ENCODE measurements at regions of chr10 and their contacts with region 1.

Region 1: DNA sequence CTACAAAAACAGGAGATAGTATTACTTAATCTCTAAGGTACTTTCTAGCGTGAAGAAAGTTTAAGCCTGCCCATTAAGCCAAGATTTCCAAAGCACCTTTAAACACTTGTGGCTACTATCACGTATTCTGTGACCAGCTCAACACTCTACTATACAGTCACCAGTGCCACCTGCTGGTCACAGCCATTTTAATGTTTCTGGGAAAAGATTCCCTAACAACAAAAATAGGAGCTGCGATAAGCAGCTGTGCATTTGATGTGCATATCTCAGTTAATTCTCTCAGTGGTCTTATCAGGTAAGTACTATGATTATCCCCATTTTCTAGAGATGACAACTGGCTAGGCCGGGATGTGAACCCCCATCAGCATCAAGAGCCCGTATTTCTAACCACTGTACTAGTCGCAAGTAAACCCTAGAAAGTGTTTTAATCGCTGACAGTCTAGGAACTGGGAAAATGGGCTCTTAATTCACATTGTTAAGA is 860 bp downstream of the SEC31B start:
- DNase-seq: peak; percentile 86
- H3K4me3 Mint-ChIP-seq: no peak overlapping the region
- H3K27ac Mint-ChIP-seq: no peak overlapping the region
- H3K4me1 Mint-ChIP-seq: peaks cover 12% of the 10 kb centered on the region
- H3K27me3 Mint-ChIP-seq: peaks cover 1% of the 10 kb centered on the region

Region 2: GRCh38 chr10:100346765-100347567 is 171.8 kb before region 1 on chr10 and contains the start of gene SCD:
- CTCF ChIA-PET with region 1: interaction called, 29 read pairs
- intact Hi-C with region 1: loop called (anchors 1 kb)
- DNase-seq: peak; percentile 95
- H3K4me3 Mint-ChIP-seq: peak within 1 kb of the TSS; percentile 97
- H3K27ac Mint-ChIP-seq: peak within 1 kb of the TSS; percentile 87
- H3K4me1 Mint-ChIP-seq: peaks cover 45% of the 10 kb centered on the region
- H3K27me3 Mint-ChIP-seq: no peaks in the 10 kb centered on the region
- total RNA-seq, gene SCD: 161 to 169 TPM

Region 3: GRCh38 chr10:100481462-100482081 is 37.2 kb before region 1 on chr10:
- CTCF ChIA-PET with region 1: interaction called, 101 read pairs
- intact Hi-C with region 1: loop called (anchors 1 kb)
- DNase-seq: peak; percentile 97
- H3K4me3 Mint-ChIP-seq: peak overlapping the region; percentile 73
- H3K27ac Mint-ChIP-seq: no peak overlapping the region
- H3K4me1 Mint-ChIP-seq: peaks cover 5% of the 10 kb centered on the region
- H3K27me3 Mint-ChIP-seq: peaks cover 9% of the 10 kb centered on the region

Region 4: DNA sequence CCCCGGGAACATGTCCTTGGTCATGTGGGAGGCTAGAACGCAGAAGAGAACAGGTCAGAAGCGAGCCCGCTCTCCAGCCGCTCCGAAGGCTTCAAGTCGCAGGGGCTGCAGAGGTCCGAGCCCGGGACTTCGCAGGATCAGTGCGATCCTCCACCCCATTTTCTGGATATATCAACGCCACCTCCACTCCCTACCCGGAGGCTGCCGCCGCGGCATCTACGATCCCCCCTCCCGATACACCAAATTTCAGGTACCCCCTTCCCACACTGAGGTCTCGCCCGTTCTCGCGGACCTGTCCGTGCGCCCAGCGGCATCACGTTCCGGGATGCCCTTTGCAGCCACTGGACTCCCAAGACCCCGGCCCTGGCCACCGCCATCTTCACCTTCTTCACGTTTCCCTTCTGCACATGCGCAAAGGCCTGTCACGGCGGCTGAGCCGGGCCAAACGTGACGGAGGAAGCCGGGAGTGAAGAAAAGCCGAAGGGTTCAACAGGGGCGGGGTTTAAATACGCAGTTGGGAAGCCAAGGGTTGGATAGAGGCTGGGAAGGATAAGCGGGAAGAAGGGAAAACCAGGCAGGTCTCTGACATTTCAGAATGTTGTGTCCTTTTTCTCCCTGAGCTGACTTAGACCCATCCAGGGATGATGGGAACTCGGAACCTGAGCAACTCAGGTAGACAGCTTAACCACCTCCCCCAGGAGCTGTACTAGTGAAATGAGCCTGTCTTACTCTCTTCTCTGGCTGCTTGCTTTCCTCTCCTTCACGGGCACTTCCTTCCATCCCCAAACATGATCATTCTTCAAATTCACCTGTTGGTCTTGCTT is 10.9 kb after region 1 on chr10 and contains the start of gene NDUFB8:
- CTCF ChIA-PET with region 1: interaction called, 41 read pairs
- intact Hi-C with region 1: no loop called
- DNase-seq: peak; percentile 95
- H3K4me3 Mint-ChIP-seq: peak within 1 kb of the TSS; percentile 100
- H3K27ac Mint-ChIP-seq: peak within 1 kb of the TSS; percentile 95
- H3K4me1 Mint-ChIP-seq: peaks cover 37% of the 10 kb centered on the region
- H3K27me3 Mint-ChIP-seq: no peaks in the 10 kb centered on the region
- total RNA-seq, gene NDUFB8: 427 to 442 TPM